Endothelial cell of umbilical vein (primary cell): ENCODE measurements at regions of chr2 and their contacts with region 1.

Region 1: GRCh38 chr2:149692961-149693396 is 105.4 kb upstream of the MMADHC start:
- DNase-seq: no peak
- H3K4me3 ChIP-seq: no peak overlapping the region
- H3K27ac ChIP-seq: no peak overlapping the region
- H3K4me1 ChIP-seq: no peaks in the 10 kb centered on the region
- H3K27me3 ChIP-seq: no peaks in the 10 kb centered on the region
- CTCF ChIP-seq: no peak
- POLR2A ChIP-seq: no peak

Region 2: GRCh38 chr2:149703281-149703680 is 10.3 kb after region 1 on chr2:
- CTCF ChIA-PET with region 1: interaction called, 10 read pairs
- POLR2A ChIA-PET with region 1: no interaction called
- dilution Hi-C with region 1: no loop called
- intact Hi-C with region 1: no loop called
- DNase-seq: peak; percentile 78
- H3K4me3 ChIP-seq: no peak overlapping the region
- H3K27ac ChIP-seq: peak overlapping the region; percentile 69
- H3K4me1 ChIP-seq: peaks cover 18% of the 10 kb centered on the region
- H3K27me3 ChIP-seq: no peaks in the 10 kb centered on the region
- CTCF ChIP-seq: no peak
- POLR2A ChIP-seq: no peak